Breast epithelium (tissue), 4 donors: ENCODE measurements at regions of chr10 and their contacts with region 1.

Region 1: GRCh38 chr10:10798102-10798863 is 219.4 kb upstream of the CELF2 start:
- DNase-seq: no peak
- H3K4me3 ChIP-seq: peak overlapping the region; percentile 35 to 61 (median 37)
- H3K27ac ChIP-seq: peak overlapping the region; percentile 86 to 95
- H3K4me1 ChIP-seq: peaks cover 5% of the 10 kb centered on the region in 2 donors
- H3K27me3 ChIP-seq: no peaks in the 10 kb centered on the region
- CTCF ChIP-seq: no peak
- POLR2A ChIP-seq: no peak

Region 2: GRCh38 chr10:10819206-10819856 is 21.0 kb after region 1 on chr10:
- intact Hi-C with region 1: loop called (anchors 1 kb)
- DNase-seq: no peak
- H3K4me3 ChIP-seq: no peak overlapping the region
- H3K27ac ChIP-seq: peak overlapping the region in 1 of 2 donors; percentile 26
- H3K4me1 ChIP-seq: peaks cover 0 to 4% of the 10 kb centered on the region in 2 donors
- H3K27me3 ChIP-seq: no peaks in the 10 kb centered on the region
- CTCF ChIP-seq: no peak
- POLR2A ChIP-seq: no peak